Naive thymus-derived CD4-positive, alpha-beta T cell (primary cell): ENCODE measurements at regions of chr22 and their contacts with region 1.

Region 1: DNA sequence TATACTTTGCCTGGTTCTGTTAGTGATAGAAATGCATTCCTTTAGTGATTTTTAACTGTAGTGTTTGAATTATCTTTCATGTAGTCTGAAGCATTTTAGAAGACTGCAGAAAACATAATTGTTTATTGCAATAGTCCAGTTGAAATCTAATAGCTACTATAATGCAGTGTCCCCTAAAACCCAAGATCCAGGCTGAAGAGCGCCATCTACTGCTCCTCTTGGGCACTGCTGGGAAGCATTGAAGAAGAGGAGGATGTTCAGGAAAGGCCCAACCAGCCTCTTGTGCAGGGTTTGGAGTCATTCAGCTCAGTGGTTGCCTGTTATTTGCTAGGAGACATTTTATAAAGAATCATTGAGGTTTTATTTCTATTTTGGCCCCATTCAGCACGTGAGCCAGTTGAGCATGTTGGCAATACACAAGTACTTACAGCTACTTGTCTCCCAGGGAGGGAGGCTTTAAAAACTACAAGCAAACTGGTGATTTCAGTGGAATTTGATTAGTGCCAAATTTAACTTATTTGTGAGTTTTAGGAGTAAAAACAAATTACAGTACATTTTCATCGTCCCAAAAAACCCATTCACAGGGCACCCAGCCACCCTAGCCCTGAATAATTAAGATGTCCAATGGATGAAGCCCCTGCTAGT is 74.9 kb upstream of the HORMAD2 start:
- DNase-seq: peak; percentile 15 to 69 (median 53)
- ATAC-seq: peak; percentile 76
- H3K4me3 ChIP-seq: no peak overlapping the region
- H3K4me3 Mint-ChIP-seq: no peak overlapping the region
- H3K27ac ChIP-seq: no peak overlapping the region
- H3K27ac Mint-ChIP-seq: peak overlapping the region in 4 of 9 donors; percentile 37 to 77 (median 48)
- H3K4me1 ChIP-seq: no peaks in the 10 kb centered on the region
- H3K4me1 Mint-ChIP-seq: peaks cover 0 to 18% (median 7%) of the 10 kb centered on the region in 7 donors
- H3K27me3 ChIP-seq: no peaks in the 10 kb centered on the region
- H3K27me3 Mint-ChIP-seq: no peaks in the 10 kb centered on the region

Region 2: DNA sequence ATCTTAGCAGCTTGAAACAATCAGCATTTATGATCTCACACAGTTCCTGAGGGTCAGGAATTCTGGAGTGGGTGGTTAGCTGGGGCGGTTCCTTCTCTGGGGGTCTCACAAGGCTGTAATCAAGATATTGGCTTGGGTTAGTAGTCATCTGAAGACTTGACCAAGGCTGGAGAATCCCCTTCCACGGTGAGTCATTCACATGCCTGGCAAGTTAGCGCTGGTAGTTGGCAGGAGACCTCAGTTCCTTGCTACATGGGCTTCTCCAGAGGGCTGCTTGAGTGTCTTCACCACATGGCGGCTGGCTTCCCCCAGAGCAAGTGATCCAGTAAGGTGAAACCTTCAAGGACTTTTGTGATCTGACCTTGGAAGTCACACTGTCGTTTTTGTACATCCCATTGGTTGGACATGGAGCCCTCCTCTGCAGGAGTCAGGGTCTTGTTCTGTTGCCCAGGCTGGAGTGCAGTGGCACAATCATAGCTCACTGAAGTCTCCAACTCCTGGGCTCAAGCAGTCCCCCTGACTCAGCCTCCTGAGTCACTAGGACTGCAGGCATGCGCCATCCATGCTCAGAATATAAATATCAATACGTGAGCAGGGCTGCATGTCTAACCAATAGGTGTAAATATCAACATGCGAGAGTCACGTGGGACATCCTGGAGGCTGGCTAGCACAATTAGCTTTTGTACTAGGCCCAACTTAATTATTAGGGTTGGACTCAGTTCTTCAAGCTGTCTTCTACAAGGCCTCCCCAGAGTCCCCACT is 417.2 kb before region 1 on chr22:
- CTCF ChIA-PET with region 1: no interaction called
- POLR2A ChIA-PET with region 1: no interaction called
- intact Hi-C with region 1: loop called in 1 of 2 experiments (anchors 1 kb)
- DNase-seq: no peak
- ATAC-seq: no peak
- H3K4me3 ChIP-seq: no peak overlapping the region
- H3K4me3 Mint-ChIP-seq: no peak overlapping the region
- H3K27ac ChIP-seq: no peak overlapping the region
- H3K27ac Mint-ChIP-seq: peak overlapping the region in 5 of 9 donors; percentile 25 to 86 (median 71)
- H3K4me1 ChIP-seq: peaks cover 6 to 8% of the 10 kb centered on the region in 2 donors
- H3K4me1 Mint-ChIP-seq: peaks cover 4 to 11% (median 10%) of the 10 kb centered on the region in 7 donors
- H3K27me3 ChIP-seq: no peaks in the 10 kb centered on the region
- H3K27me3 Mint-ChIP-seq: no peaks in the 10 kb centered on the region

Region 3: GRCh38 chr22:29635734-29636357 is 369.5 kb before region 1 on chr22:
- CTCF ChIA-PET with region 1: interaction called, 8 read pairs
- POLR2A ChIA-PET with region 1: no interaction called
- intact Hi-C with region 1: loop called (anchors 1 to 5 kb)
- DNase-seq: peak in 3 of 9 donors; percentile 6 to 22 (median 14)
- ATAC-seq: peak; percentile 48
- H3K4me3 ChIP-seq: no peak overlapping the region
- H3K4me3 Mint-ChIP-seq: no peak overlapping the region
- H3K27ac ChIP-seq: no peak overlapping the region
- H3K27ac Mint-ChIP-seq: no peak overlapping the region
- H3K4me1 ChIP-seq: no peaks in the 10 kb centered on the region
- H3K4me1 Mint-ChIP-seq: peaks cover 22 to 48% (median 36%) of the 10 kb centered on the region in 7 donors
- H3K27me3 ChIP-seq: no peaks in the 10 kb centered on the region
- H3K27me3 Mint-ChIP-seq: no peaks in the 10 kb centered on the region

Region 4: DNA sequence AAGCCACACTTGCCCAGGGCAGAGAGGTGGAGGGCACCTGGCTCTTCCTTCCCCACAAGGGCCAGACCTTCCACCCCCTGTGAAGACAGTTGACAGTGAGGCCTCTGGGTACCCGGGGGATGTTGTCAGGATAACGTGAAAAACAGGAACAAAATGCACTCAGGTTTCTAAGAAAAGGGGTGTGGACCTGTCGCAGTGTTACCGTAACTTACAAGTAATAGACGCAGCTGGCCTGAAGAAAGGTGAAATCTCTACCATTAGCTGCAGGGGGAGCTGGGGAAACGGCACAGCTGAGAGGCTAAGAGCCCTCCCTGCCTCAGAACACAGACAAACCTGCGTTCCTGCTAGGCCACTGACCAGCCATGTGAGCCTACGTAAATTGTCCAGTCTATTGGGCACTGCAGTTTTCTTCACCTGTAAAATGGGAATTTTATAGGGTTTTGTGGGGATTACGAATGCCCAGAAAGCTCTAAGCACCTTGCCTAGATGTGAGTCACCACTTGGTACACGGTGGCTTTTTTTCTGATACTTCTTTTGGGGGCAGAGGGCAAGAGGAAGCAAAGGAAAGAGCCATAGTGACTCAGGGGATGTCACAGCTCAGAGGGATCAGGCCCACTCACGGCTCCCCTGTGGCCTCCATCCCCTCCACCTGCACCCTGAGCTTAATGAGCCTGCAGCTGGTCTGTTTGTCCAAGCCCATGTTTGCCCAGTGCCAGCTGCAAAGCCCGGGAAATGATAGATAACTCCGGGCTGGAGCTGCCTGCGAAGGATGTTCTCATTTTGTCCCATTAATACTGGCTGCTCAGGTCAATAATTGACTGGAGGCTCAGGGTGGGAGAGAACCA is 304.0 kb before region 1 on chr22:
- CTCF ChIA-PET with region 1: interaction called, 3 read pairs
- POLR2A ChIA-PET with region 1: no interaction called
- intact Hi-C with region 1: loop called (anchors 1 to 5 kb)
- DNase-seq: peak in 5 of 9 donors; percentile 18 to 59 (median 52)
- ATAC-seq: peak; percentile 81
- H3K4me3 ChIP-seq: no peak overlapping the region
- H3K4me3 Mint-ChIP-seq: peak overlapping the region in 7 of 10 donors; percentile 18 to 57 (median 34)
- H3K27ac ChIP-seq: no peak overlapping the region
- H3K27ac Mint-ChIP-seq: peak overlapping the region; percentile 62 to 91 (median 66)
- H3K4me1 ChIP-seq: peaks cover 0 to 19% of the 10 kb centered on the region in 2 donors
- H3K4me1 Mint-ChIP-seq: peaks cover 15 to 31% (median 27%) of the 10 kb centered on the region in 7 donors
- H3K27me3 ChIP-seq: no peaks in the 10 kb centered on the region
- H3K27me3 Mint-ChIP-seq: peaks cover 0 to 6% (median 0%) of the 10 kb centered on the region in 5 donors

Region 5: GRCh38 chr22:29883045-29883774 is 122.1 kb before region 1 on chr22 and contains the start of gene MTMR3:
- CTCF ChIA-PET with region 1: interaction called, 4 read pairs
- POLR2A ChIA-PET with region 1: no interaction called
- intact Hi-C with region 1: loop called (anchors 5 to 10 kb)
- DNase-seq: peak; percentile 71 to 99 (median 82)
- ATAC-seq: peak; percentile 91
- H3K4me3 ChIP-seq: peak within 1 kb of the TSS; percentile 69
- H3K4me3 Mint-ChIP-seq: peak within 1 kb of the TSS in 7 of 10 donors; percentile 72 to 95 (median 92)
- H3K27ac ChIP-seq: peak within 1 kb of the TSS; percentile 93
- H3K27ac Mint-ChIP-seq: peak within 1 kb of the TSS; percentile 70 to 93 (median 84)
- H3K4me1 ChIP-seq: peaks cover 17 to 21% of the 10 kb centered on the region in 2 donors
- H3K4me1 Mint-ChIP-seq: peaks cover 0 to 12% (median 1%) of the 10 kb centered on the region in 7 donors
- H3K27me3 ChIP-seq: no peaks in the 10 kb centered on the region
- H3K27me3 Mint-ChIP-seq: peaks cover 0 to 3% (median 0%) of the 10 kb centered on the region in 5 donors
- total RNA-seq, gene MTMR3: 33.2 to 88.7 (median 64.6) TPM

Region 6: GRCh38 chr22:30541961-30542810 is 536.9 kb after region 1 on chr22:
- CTCF ChIA-PET with region 1: no interaction called
- POLR2A ChIA-PET with region 1: no interaction called
- intact Hi-C with region 1: no loop called
- DNase-seq: no peak
- ATAC-seq: no peak
- H3K4me3 ChIP-seq: no peak overlapping the region
- H3K4me3 Mint-ChIP-seq: peak overlapping the region in 5 of 10 donors; percentile 27 to 64 (median 45)
- H3K27ac ChIP-seq: no peak overlapping the region
- H3K27ac Mint-ChIP-seq: no peak overlapping the region
- H3K4me1 ChIP-seq: no peaks in the 10 kb centered on the region
- H3K4me1 Mint-ChIP-seq: peaks cover 0 to 9% (median 4%) of the 10 kb centered on the region in 7 donors
- H3K27me3 ChIP-seq: peaks cover 0 to 3% of the 10 kb centered on the region in 2 donors
- H3K27me3 Mint-ChIP-seq: peaks cover 35 to 51% (median 47%) of the 10 kb centered on the region in 5 donors